Aorta (tissue), 5 donors: ENCODE measurements at regions of chr1 and their contacts with region 1.

Region 1: GRCh38 chr1:83998498-83999315 is at the start of gene TTLL7:
- DNase-seq: peak; percentile 89 to 95
- ATAC-seq: peak; percentile 94
- H3K4me3 ChIP-seq: peak within 1 kb of the TSS; percentile 95 to 100
- H3K27ac ChIP-seq: peak within 1 kb of the TSS; percentile 57 to 92
- H3K4me1 ChIP-seq: peaks cover 0 to 2% of the 10 kb centered on the region in 2 donors
- H3K27me3 ChIP-seq: no peaks in the 10 kb centered on the region
- total RNA-seq, gene TTLL7: 80.2 to 107 TPM

Region 2: DNA sequence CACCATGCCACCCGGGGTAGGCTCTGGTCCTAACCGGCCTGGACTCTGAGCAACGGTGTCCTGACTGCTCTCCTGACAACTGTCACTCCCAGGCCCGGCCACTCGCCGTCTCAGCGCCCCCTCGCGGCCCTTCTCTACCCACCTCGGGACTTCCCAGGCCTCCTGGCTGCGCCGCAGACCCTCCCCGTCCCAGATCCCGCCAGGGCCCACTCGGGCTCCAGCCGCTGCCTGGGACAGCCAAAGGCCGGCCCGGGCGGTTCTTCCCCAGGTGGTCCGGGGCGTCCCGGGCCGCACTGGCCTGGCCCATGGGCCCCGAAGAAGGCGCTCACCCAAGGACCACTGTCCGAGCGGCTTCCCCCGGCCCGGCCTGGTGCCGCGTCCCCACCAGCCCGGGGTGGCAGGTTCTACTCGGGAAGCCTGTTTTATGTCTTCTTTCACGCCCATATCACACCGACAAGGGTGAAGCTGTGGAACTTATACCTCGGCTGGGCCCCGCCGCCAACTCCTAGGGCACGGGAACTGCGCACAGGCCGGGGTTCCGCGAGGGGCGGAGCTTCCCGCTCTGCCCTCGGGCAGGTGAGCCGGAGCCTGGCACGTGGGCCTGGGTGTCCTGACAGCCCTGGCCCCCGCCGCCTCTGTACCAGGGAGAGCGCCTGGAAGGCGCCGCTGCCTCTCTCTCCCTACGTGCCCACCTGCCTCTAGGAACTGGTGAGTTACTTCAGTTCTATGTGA is 138.1 kb before region 1 on chr1:
- intact Hi-C with region 1: no loop called
- DNase-seq: peak; percentile 85 to 95
- ATAC-seq: peak; percentile 90
- H3K4me3 ChIP-seq: peak overlapping the region; percentile 79 to 82
- H3K27ac ChIP-seq: peak overlapping the region; percentile 35 to 87
- H3K4me1 ChIP-seq: no peaks in the 10 kb centered on the region
- H3K27me3 ChIP-seq: no peaks in the 10 kb centered on the region

Region 3: DNA sequence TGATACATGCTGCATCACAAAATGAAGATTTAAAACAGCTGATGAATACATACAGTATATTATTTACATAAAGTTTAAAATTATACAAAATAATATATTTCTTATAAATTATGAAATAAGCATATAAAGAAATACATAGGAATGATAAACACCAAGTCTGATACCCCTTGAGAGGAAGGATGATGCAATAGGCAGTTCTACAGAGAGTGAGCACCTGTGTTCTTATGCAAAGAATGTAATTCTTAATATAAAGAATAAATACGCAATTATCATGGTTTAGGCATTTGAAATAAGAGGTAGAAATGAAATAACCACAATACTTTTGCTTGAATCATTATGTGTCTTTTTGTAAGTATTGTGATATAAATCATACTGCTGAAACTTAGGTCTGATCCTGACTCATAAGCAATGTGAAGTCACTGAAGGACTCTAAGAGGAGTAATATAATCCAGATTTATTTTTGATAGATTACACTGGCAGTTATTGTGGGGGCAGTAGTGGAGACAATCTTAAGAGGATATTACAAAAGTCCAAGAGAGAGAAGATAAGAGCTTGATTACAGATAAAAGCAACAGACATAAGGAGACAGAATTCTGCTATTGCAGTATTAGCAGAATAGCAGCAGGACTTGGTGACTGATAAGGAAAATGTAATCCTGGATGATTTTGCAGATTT is 38.7 kb before region 1 on chr1:
- intact Hi-C with region 1: loop called in 1 of 2 experiments (anchors 5 kb)
- DNase-seq: no peak
- ATAC-seq: no peak
- H3K4me3 ChIP-seq: no peak overlapping the region
- H3K27ac ChIP-seq: peak overlapping the region in 1 of 2 donors; percentile 57
- H3K4me1 ChIP-seq: peaks cover 5 to 16% of the 10 kb centered on the region in 2 donors
- H3K27me3 ChIP-seq: no peaks in the 10 kb centered on the region

Region 4: DNA sequence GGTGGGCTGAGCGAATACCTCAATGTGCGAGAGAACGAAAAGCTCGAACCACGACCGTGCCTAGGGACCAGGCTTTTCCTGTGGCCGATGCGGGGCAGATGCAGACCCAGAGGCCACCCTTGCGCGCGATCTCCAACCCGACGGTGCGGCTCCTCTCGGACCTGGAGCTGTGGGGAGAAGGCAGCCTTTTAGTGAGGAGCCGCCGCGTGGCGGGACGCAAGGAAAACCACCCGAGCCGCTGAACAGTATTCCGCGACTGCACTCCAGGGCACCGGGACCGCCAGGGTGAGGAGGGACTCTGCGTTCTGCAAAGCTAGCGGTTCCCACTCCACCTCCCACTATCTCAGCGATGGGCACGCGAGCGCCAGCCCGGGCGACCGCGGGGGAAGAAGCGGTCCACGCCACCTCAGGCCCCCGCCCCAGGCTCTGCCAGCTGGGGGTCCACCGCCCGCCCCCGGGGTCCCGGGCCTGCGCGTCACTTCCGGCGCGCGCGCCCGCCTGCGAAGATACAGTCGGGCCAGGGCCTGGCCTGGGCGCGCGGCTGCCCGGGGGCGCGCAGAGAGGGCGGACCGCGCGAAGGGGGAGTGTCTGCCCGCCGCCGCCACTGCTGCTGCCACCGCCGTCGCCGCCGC is 78.9 kb after region 1 on chr1:
- intact Hi-C with region 1: loop called (anchors 5 kb)
- DNase-seq: peak; percentile 76 to 92
- ATAC-seq: peak; percentile 98
- H3K4me3 ChIP-seq: peak overlapping the region; percentile 91 to 98
- H3K27ac ChIP-seq: peak overlapping the region; percentile 92 to 95
- H3K4me1 ChIP-seq: peaks cover 0 to 2% of the 10 kb centered on the region in 2 donors
- H3K27me3 ChIP-seq: no peaks in the 10 kb centered on the region